Activated CD4-positive, alpha-beta T cell treated with anti-CD3 and anti-CD28 coated beads, Interleukin-2, amount 10 ng/mL, durations not matched to agents 24 days and 14 days (primary cell): ENCODE measurements at regions of chr18 and their contacts with region 1.

Region 1: GRCh38 chr18:58699551-58699950 is 28.3 kb downstream of the MALT1 start:
- DNase-seq: peak; percentile 49
- H3K4me3 Mint-ChIP-seq: no peak overlapping the region
- H3K27ac Mint-ChIP-seq: no peak overlapping the region
- H3K4me1 Mint-ChIP-seq: peaks cover 34% of the 10 kb centered on the region
- H3K27me3 Mint-ChIP-seq: no peaks in the 10 kb centered on the region

Region 2: DNA sequence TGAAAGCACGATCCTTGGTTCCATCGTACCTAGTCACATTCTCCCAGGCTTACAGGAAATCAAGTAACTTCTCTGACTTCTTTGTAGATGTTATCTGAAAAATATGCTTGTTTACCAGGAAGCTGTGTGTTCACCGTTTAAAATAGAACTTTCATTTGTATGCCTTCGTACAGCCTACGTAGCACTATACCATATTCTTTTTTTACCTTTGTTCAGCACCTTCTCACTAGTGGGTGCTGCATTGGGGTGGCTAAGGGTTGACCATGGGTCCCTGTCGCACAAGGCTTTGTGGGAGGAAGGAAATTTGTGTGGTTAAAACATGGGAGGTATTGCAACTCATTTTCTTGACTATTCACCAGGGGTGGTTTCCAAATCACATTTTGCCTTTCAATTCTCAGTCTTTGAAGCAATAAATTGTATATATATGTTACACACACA is 11.7 kb before region 1 on chr18:
- intact Hi-C with region 1: loop called (anchors 1 kb)
- DNase-seq: peak; percentile 91
- H3K4me3 Mint-ChIP-seq: peak overlapping the region; percentile 51
- H3K27ac Mint-ChIP-seq: peak overlapping the region; percentile 92
- H3K4me1 Mint-ChIP-seq: peaks cover 57% of the 10 kb centered on the region
- H3K27me3 Mint-ChIP-seq: no peaks in the 10 kb centered on the region

Region 3: GRCh38 chr18:58714259-58714658 is 14.7 kb after region 1 on chr18:
- intact Hi-C with region 1: loop called (anchors 2 kb)
- DNase-seq: peak; percentile 55
- H3K4me3 Mint-ChIP-seq: no peak overlapping the region
- H3K27ac Mint-ChIP-seq: peak overlapping the region; percentile 80
- H3K4me1 Mint-ChIP-seq: peaks cover 40% of the 10 kb centered on the region
- H3K27me3 Mint-ChIP-seq: no peaks in the 10 kb centered on the region